Activated CD4-positive, alpha-beta T cell treated with anti-CD3 and anti-CD28 coated beads, Interleukin-2, amount 10 ng/mL, durations not matched to agents 7 days and 5 days (primary cell): ENCODE measurements at regions of chr7 and their contacts with region 1.

Region 1: DNA sequence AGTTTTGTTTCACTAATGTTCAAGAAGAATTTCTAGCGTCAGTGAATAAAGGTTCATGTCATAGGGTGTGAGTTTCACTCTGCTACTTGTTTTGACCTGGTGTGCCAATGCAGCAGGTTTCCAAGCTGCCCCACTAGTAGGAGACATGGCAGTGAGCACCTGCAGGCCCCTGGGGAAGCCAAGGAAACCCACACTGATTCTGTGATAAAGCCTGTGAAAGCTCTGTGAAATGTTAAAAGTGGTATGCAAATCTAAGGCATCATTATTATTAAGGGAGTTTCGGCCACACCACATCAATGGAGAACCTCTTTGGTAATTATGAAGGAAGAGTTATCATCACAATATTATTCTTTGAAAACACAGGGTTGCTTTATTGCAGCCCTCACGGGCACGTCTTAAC is 46.4 kb downstream of the ABCB5 start:
- DNase-seq: no peak
- H3K4me3 Mint-ChIP-seq: no peak overlapping the region
- H3K27ac Mint-ChIP-seq: no peak overlapping the region
- H3K4me1 Mint-ChIP-seq: no peaks in the 10 kb centered on the region
- H3K27me3 Mint-ChIP-seq: no peaks in the 10 kb centered on the region

Region 2: DNA sequence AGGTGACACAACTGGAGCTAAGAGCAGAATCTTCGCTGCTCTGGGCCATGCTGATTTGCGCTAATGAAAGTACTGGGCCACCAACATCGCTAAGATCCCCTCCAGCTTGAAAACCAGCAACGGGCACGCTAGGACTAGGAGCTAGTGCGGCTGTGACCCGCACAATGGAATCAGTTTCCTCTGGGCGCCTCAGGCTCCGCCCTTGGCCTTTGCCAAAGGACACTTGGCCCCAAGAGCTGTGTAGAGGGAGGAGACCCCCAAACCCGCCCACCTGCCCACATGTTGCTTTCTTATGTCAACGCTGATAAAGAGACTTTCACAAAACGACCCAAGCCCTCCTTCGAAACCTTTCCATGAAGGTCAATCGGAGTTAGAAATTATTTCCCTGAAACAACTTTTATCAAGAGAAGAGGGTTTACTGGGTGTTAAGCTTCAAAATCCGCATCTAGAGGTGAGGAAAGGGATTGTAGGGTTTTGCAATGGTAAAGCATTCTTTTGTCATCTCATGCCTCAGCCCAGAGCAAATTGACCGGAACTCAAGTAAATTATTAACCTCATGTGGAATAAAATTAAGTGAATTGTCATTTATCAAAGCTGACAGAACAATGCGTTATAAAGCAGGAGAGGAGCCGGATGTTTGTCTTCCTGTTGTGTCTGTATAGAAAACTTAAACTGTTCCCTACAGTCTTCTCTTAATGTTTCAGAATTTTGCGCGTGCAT is 37.1 kb before region 1 on chr7:
- CTCF ChIA-PET with region 1: no interaction called
- POLR2A ChIA-PET with region 1: no interaction called
- DNase-seq: no peak
- H3K4me3 Mint-ChIP-seq: no peak overlapping the region
- H3K27ac Mint-ChIP-seq: no peak overlapping the region
- H3K4me1 Mint-ChIP-seq: no peaks in the 10 kb centered on the region
- H3K27me3 Mint-ChIP-seq: no peaks in the 10 kb centered on the region

Region 3: DNA sequence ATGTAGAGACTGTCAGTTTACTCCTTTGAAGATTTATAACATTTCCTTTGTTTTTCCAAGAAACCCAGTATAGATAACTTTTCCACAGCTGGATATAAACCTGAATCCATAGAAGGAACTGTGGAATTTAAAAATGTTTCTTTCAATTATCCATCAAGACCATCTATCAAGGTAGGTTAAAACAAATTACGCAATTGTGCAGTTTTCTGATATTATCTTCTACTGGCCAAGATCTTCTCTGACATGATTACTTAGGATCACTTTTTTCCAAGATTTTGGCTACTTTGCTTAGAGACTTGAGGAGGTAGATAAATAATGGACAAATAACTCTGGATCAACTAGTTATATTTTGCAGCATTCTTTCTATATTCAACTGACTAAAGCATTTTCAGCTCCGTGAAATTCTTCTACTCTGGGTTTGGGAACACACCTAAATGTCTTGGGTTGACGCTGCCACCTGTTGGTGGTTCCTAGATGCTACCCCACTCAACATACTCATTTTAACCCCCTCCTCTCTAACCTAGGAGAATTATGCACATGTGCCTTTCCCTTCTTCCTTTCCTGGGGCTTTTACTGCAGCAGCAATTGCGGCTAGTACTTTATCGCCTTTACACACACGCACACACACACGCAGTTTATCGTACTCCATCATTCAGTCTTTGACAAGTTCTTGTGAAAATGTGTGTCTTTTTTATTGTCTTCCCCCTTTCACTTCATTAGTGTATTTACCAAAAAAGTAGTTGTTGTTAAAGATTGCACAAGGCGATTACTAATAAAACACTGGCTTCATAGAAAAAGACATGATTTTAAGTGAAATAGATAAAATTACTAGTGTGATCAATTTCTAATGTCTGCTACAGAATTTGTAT is 13.7 kb before region 1 on chr7:
- CTCF ChIA-PET with region 1: interaction called, 10 read pairs
- POLR2A ChIA-PET with region 1: no interaction called
- DNase-seq: no peak
- H3K4me3 Mint-ChIP-seq: no peak overlapping the region
- H3K27ac Mint-ChIP-seq: no peak overlapping the region
- H3K4me1 Mint-ChIP-seq: no peaks in the 10 kb centered on the region
- H3K27me3 Mint-ChIP-seq: peaks cover 2% of the 10 kb centered on the region

Region 4: GRCh38 chr7:20684581-20684980 is 22.7 kb after region 1 on chr7:
- CTCF ChIA-PET with region 1: no interaction called
- POLR2A ChIA-PET with region 1: no interaction called
- DNase-seq: no peak
- H3K4me3 Mint-ChIP-seq: no peak overlapping the region
- H3K27ac Mint-ChIP-seq: no peak overlapping the region
- H3K4me1 Mint-ChIP-seq: no peaks in the 10 kb centered on the region
- H3K27me3 Mint-ChIP-seq: no peaks in the 10 kb centered on the region